ENCODE measurements at regions of chr16 and their contacts with region 1.

Region 1: DNA sequence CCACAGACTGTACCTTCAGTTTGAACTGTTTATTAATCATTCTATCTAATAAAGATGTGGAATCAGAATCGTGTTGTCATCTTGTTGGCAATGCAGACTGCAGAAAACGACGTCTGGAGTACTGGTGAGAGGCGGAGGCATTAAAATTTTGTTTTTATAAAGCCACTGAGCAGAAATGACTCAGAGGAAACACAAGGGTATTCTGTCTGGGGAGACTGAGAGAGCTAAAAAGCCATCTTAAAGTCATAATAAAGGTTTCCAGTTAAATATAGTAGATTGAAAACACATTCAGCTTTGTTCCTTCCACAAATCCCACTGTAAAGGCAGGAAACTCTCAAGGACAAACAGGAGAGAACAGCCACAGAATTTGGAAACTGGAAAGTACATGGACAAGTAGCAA is 74.2 kb downstream of the CPPED1 start:
- DNase-seq: peak; percentile 94
- H3K4me3 ChIP-seq: no peak overlapping the region
- H3K27ac ChIP-seq: peak overlapping the region; percentile 96
- H3K4me1 ChIP-seq: peaks cover 21% of the 10 kb centered on the region
- H3K27me3 ChIP-seq: no peaks in the 10 kb centered on the region
- CTCF ChIP-seq: no peak
- POLR2A ChIP-seq: no peak

Region 2: GRCh38 chr16:12646490-12647274 is 82.8 kb before region 1 on chr16:
- CTCF ChIA-PET with region 1: interaction called, 3 read pairs
- POLR2A ChIA-PET with region 1: interaction called, 5 read pairs
- dilution Hi-C with region 1: no loop called
- intact Hi-C with region 1: loop called (anchors 2 kb)
- DNase-seq: peak; percentile 94
- H3K4me3 ChIP-seq: no peak overlapping the region
- H3K27ac ChIP-seq: peak overlapping the region; percentile 67
- H3K4me1 ChIP-seq: peaks cover 29% of the 10 kb centered on the region
- H3K27me3 ChIP-seq: no peaks in the 10 kb centered on the region
- CTCF ChIP-seq: no peak
- POLR2A ChIP-seq: no peak

Region 3: DNA sequence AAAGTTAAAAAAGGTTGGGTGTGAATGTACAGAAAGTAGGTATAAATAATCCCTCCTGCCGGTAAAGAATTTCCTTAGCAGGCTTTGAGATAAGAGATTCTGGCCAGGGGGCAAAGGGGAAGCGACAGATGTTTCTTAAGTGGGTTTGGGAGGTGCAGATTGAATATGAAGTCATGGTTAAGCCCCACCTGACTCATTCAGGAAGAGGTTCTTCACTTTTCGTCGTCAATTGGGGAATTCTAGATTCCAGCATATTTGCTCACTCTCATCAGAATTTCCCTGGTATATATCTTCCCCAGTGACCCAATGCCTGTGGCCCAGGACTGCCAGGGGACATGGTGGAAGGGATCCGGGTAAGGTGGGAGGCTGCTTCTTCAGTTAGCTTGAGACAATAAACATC is 53.6 kb before region 1 on chr16:
- CTCF ChIA-PET with region 1: no interaction called
- POLR2A ChIA-PET with region 1: no interaction called
- dilution Hi-C with region 1: no loop called
- intact Hi-C with region 1: loop called (anchors 2 kb)
- DNase-seq: peak; percentile 91
- H3K4me3 ChIP-seq: no peak overlapping the region
- H3K27ac ChIP-seq: peak overlapping the region; percentile 51
- H3K4me1 ChIP-seq: peaks cover 33% of the 10 kb centered on the region
- H3K27me3 ChIP-seq: no peaks in the 10 kb centered on the region
- CTCF ChIP-seq: no peak
- POLR2A ChIP-seq: peak; percentile 58